Transverse colon (tissue), 4 donors: ENCODE measurements at regions of chr19 and their contacts with region 1.

Region 1: DNA sequence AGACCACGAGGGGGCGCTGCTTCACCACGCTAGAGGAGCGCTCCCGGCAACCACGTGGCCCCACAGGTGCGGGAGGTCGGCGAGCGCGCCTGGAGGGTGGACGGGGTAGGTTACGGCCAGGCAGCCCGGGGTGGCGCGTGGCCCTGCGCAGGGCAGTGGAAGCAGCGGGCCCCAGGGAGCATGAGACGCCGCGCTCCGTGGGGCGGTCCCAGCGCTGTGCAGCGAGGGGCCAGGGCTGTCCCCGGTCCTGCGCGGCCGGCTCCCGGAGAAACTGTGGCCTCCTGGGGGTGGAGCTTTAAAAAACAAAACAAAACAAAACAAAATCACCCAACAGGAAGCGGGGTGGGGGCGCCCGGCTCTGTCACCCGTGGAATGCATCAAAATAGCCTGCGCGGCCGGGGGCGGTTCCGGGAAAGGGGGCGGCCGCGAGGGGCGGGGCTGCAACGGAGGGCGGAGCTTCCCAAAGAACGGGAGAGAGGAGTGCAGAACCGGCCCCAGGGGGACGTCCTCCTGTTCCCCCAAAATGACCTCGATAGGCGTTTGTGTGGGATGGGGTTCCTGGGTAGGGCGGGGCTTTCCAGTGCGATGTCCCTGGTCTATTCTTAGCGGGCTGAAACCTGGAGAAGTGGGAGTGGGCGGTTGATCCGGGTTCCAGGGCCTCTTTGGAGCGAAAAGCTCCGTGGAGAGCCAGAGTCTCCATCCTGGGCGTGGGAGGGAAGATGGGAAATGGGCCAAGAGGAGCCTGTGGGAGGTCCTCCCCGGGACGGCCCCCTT is 27.3 kb downstream of the NUMBL start:
- DNase-seq: peak; percentile 94
- H3K4me3 ChIP-seq: peak overlapping the region; percentile 45 to 71 (median 56)
- H3K27ac ChIP-seq: peak overlapping the region; percentile 80 to 93 (median 87)
- H3K4me1 ChIP-seq: peaks cover 7 to 14% (median 11%) of the 10 kb centered on the region in 4 donors
- H3K27me3 ChIP-seq: no peaks in the 10 kb centered on the region
- CTCF ChIP-seq: peak; percentile 96 to 99 (median 98)
- EP300 ChIP-seq: no peak
- POLR2A ChIP-seq: no peak

Region 2: GRCh38 chr19:40231544-40232424 is 431.3 kb before region 1 on chr19:
- in situ Hi-C with region 1: no loop called
- intact Hi-C with region 1: no loop called
- DNase-seq: no peak
- H3K4me3 ChIP-seq: no peak overlapping the region
- H3K27ac ChIP-seq: peak overlapping the region in 1 of 4 donors; percentile 21
- H3K4me1 ChIP-seq: peaks cover 0 to 9% (median 7%) of the 10 kb centered on the region in 4 donors
- H3K27me3 ChIP-seq: peaks cover 14% of the 10 kb centered on the region
- CTCF ChIP-seq: no peak
- EP300 ChIP-seq: no peak
- POLR2A ChIP-seq: no peak

Region 3: GRCh38 chr19:40576585-40577451 is 86.3 kb before region 1 on chr19 and contains the start of gene SHKBP1:
- in situ Hi-C with region 1: no loop called
- intact Hi-C with region 1: no loop called
- DNase-seq: peak; percentile 96
- H3K4me3 ChIP-seq: peak within 1 kb of the TSS; percentile 53 to 74 (median 66)
- H3K27ac ChIP-seq: peak within 1 kb of the TSS; percentile 76 to 85 (median 80)
- H3K4me1 ChIP-seq: peaks cover 0 to 21% (median 12%) of the 10 kb centered on the region in 4 donors
- H3K27me3 ChIP-seq: no peaks in the 10 kb centered on the region
- CTCF ChIP-seq: no peak
- EP300 ChIP-seq: no peak
- POLR2A ChIP-seq: peak; percentile 79
- total RNA-seq, gene SHKBP1: 58.7 to 111 (median 60.9) TPM

Region 4: GRCh38 chr19:40806488-40807468 is 143.7 kb after region 1 on chr19:
- in situ Hi-C with region 1: loop called in 1 of 4 experiments (anchors 10 kb)
- intact Hi-C with region 1: no loop called
- DNase-seq: peak; percentile 76
- H3K4me3 ChIP-seq: no peak overlapping the region
- H3K27ac ChIP-seq: peak overlapping the region; percentile 91 to 97 (median 96)
- H3K4me1 ChIP-seq: peaks cover 54 to 77% (median 62%) of the 10 kb centered on the region in 4 donors
- H3K27me3 ChIP-seq: no peaks in the 10 kb centered on the region
- CTCF ChIP-seq: peak; percentile 70 to 82 (median 74)
- EP300 ChIP-seq: no peak
- POLR2A ChIP-seq: no peak

Region 5: GRCh38 chr19:40822161-40822560 is 159.1 kb after region 1 on chr19:
- in situ Hi-C with region 1: loop called in 3 of 4 experiments (anchors 5 to 10 kb)
- intact Hi-C with region 1: loop called (anchors 5 kb)
- DNase-seq: no peak
- H3K4me3 ChIP-seq: no peak overlapping the region
- H3K27ac ChIP-seq: peak overlapping the region in 2 of 4 donors; percentile 25 to 45
- H3K4me1 ChIP-seq: peaks cover 6 to 38% (median 19%) of the 10 kb centered on the region in 4 donors
- H3K27me3 ChIP-seq: no peaks in the 10 kb centered on the region
- CTCF ChIP-seq: no peak
- EP300 ChIP-seq: no peak
- POLR2A ChIP-seq: no peak

Region 6: GRCh38 chr19:41144403-41144802 is 481.3 kb after region 1 on chr19:
- in situ Hi-C with region 1: loop called in 2 of 4 experiments (anchors 10 to 25 kb)
- intact Hi-C with region 1: loop called (anchors 5 kb)
- DNase-seq: peak; percentile 92
- H3K4me3 ChIP-seq: no peak overlapping the region
- H3K27ac ChIP-seq: no peak overlapping the region
- H3K4me1 ChIP-seq: no peaks in the 10 kb centered on the region
- H3K27me3 ChIP-seq: no peaks in the 10 kb centered on the region
- CTCF ChIP-seq: peak; percentile 84 to 95 (median 86)
- EP300 ChIP-seq: no peak
- POLR2A ChIP-seq: no peak

Region 7: GRCh38 chr19:41263850-41264580 is 600.9 kb after region 1 on chr19 and contains the start of gene HNRNPUL1:
- in situ Hi-C with region 1: loop called in 1 of 4 experiments (anchors 25 kb)
- intact Hi-C with region 1: no loop called
- DNase-seq: peak; percentile 99
- H3K4me3 ChIP-seq: peak within 1 kb of the TSS; percentile 89 to 99 (median 98)
- H3K27ac ChIP-seq: peak within 1 kb of the TSS; percentile 99 to 100 (median 100)
- H3K4me1 ChIP-seq: peaks cover 11 to 32% (median 26%) of the 10 kb centered on the region in 4 donors
- H3K27me3 ChIP-seq: no peaks in the 10 kb centered on the region
- CTCF ChIP-seq: peak in 2 of 5 experiments; percentile 11 to 45
- EP300 ChIP-seq: no peak
- POLR2A ChIP-seq: no peak
- total RNA-seq, gene HNRNPUL1: 115 to 296 (median 145) TPM